Ovary (tissue), 10 donors: ENCODE measurements at regions of chr10 and their contacts with region 1.

Region 1: DNA sequence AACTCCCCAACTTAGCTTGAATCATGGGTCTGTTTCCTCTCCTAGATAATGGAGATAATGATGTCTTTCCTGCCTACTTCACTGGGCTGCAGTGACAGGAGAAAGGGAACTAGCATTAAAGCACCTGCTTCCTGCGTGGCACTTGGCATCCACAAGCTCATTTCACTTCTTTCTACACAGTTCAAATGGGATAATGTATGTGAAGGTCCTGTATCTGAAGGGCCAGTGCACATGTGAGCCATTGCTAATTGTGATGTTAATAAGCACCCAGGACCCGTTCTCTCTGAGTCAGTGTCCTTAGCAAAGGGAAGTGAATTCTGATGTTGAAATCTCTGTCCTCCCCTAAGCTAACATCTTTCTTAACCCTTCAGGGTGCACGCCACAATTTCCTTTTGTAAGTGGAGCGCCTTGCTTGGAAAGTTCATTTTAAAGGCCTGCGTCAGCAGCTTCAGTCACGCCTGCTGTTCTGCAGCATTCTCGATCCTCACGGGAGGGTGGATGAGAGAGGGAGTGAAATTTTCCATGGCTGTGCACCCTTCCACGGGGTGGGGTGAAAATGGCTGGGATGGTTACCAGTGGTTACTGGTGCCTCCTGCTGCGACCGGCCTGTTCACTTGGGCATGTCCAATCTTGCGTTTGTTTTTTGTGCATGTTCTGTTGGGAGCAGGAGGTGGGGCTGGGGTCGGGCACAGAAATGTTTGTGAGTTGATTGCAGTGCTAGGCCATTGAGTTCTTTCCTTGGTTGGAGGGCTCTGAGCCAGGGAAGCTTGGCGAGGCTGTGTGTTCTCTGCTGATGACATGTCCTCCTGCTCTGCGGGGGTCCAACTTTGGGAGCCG is 59.2 kb downstream of the HK1 start:
- DNase-seq: no peak
- H3K4me3 ChIP-seq: no peak overlapping the region
- H3K27ac ChIP-seq: no peak overlapping the region
- H3K4me1 ChIP-seq: peaks cover 21% of the 10 kb centered on the region
- H3K27me3 ChIP-seq: no peaks in the 10 kb centered on the region
- CTCF ChIP-seq: no peak
- EP300 ChIP-seq: no peak
- POLR2A ChIP-seq: no peak

Region 2: DNA sequence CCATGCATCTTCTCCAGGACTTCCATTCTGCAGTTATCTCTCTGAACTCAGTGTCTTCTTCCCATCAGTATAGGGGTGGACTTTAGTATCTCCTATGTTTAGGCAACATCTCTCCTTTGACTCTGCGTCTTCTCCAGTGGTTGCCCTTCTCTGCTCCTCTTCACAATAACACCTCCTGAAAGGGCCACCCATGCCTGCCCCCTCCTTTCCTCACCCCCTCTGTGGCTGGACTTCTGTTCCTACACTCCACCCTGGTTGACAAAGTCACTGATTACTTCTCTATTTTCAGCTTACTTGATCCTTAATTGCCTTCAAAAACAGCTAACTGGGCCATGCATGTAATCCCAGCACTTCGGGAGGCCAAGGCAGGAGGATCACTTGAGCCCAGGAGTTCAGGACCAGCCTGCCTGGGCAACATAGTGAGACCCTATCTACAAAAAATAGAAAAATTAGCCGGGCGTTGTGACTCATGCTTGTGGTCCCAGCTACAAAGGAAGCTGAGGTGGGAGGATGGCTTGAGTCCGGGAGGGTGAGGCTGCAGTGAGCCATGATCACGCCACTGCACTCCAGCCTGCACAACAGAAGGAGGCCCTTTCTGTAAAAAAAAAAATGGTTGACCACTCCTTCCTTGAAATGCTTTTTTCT is 235.9 kb before region 1 on chr10:
- intact Hi-C with region 1: no loop called
- DNase-seq: no peak
- H3K4me3 ChIP-seq: no peak overlapping the region
- H3K27ac ChIP-seq: no peak overlapping the region
- H3K4me1 ChIP-seq: no peaks in the 10 kb centered on the region
- H3K27me3 ChIP-seq: no peaks in the 10 kb centered on the region
- CTCF ChIP-seq: no peak
- EP300 ChIP-seq: no peak
- POLR2A ChIP-seq: no peak

Region 3: DNA sequence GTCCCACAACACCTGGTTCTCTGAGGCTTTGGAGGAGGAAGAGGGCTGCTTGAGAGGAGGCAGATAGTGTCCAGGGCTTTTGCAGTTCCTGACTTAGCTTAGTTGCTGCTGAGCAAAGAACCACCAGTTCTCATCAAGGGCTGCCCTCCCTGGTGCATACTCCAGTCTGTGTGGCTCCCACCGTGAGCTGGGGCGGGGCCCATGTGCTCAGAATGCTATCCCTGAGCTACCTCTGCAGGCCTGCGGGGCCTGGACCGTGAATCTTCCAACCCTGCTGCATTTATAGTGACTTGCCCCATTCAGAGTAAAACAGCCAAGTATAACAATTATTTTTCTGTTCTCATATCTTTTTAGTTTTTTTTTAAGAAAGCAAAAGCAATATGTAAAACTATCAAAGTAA is 30.0 kb after region 1 on chr10:
- intact Hi-C with region 1: loop called in 1 of 4 experiments (anchors 2 kb)
- DNase-seq: no peak
- H3K4me3 ChIP-seq: no peak overlapping the region
- H3K27ac ChIP-seq: no peak overlapping the region
- H3K4me1 ChIP-seq: no peaks in the 10 kb centered on the region
- H3K27me3 ChIP-seq: no peaks in the 10 kb centered on the region
- CTCF ChIP-seq: no peak
- EP300 ChIP-seq: no peak
- POLR2A ChIP-seq: no peak

Region 4: DNA sequence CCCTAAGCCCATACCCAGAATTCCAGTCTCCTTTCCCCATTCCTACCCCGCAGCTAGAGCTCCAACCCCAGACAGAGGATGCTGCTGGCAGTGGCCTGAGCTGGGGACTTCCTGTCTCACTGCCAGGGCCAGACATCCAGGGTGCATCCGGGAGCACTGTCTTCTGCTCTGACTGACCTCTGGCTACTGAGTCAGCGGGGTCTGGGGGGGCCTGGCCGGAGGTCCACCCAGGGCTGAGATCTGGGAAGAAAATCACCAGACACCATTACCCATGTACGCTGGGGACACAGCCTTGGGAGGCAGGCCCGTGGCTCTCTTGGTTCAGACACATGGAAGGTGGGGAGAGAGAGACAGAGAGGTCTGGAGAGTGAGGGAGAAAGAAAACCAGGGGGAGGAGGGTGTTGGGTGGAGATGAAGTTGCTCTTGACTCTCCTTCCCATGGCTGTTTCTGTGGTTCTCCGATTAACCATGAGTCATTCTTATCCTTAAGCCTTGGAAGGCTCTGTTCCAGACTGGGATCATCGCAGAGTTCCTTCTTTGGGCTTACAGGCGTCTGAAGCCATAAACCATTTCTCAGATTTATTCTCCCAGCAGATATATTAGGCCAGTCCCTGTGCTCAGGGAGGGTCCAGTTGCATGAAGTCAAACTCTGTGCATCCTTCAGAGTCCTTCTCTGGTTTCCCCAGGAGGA is 137.4 kb after region 1 on chr10:
- intact Hi-C with region 1: no loop called
- DNase-seq: no peak
- H3K4me3 ChIP-seq: no peak overlapping the region
- H3K27ac ChIP-seq: no peak overlapping the region
- H3K4me1 ChIP-seq: peaks cover 5% of the 10 kb centered on the region
- H3K27me3 ChIP-seq: no peaks in the 10 kb centered on the region
- CTCF ChIP-seq: no peak
- EP300 ChIP-seq: no peak
- POLR2A ChIP-seq: no peak